Pancreas (tissue), 10 donors: ENCODE measurements at regions of chr6 and their contacts with region 1.

Region 1: GRCh38 chr6:131909408-131910218 is 41.6 kb downstream of the CCN2 start:
- DNase-seq: peak in 5 of 6 donors; percentile 53 to 80 (median 64)
- ATAC-seq: peak; percentile 85 to 97 (median 94)
- H3K4me3 ChIP-seq: no peak overlapping the region
- H3K27ac ChIP-seq: no peak overlapping the region
- H3K4me1 ChIP-seq: no peaks in the 10 kb centered on the region
- H3K27me3 ChIP-seq: no peaks in the 10 kb centered on the region
- CTCF ChIP-seq: peak; percentile 78 to 86 (median 85)

Region 2: GRCh38 chr6:131683479-131683878 is 226.1 kb before region 1 on chr6:
- intact Hi-C with region 1: no loop called
- DNase-seq: no peak
- ATAC-seq: no peak
- H3K4me3 ChIP-seq: no peak overlapping the region
- H3K27ac ChIP-seq: no peak overlapping the region
- H3K4me1 ChIP-seq: no peaks in the 10 kb centered on the region
- H3K27me3 ChIP-seq: no peaks in the 10 kb centered on the region
- CTCF ChIP-seq: no peak

Region 3: DNA sequence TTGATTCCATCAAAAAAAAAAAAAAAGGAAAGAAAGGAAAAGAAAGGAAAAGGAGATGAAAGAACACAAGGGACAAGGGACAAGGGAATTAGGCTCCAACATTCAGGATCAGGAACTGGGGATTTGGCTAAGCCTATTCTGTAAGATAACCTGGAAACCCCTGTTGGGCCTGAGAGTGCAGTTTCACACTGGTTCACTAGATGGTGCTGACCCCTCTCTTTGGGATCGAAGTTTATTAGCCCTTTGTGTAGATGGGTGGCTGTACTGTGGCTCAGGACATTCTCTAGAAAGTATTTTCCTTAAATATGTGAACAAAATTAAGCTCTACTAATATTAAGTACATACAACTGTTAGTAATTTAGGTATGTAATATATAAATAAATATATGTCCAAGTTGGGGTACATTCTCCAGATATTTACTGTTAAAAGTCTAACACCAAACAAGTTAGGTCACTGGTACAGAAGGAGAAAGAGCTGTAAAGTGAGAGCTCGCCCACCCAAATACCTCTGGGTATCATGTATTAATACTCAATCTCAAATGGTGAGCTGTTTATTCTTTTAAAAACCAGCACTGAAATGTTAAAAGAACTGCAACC is 214.7 kb before region 1 on chr6:
- intact Hi-C with region 1: loop called in 1 of 3 experiments (anchors 5 kb)
- DNase-seq: peak in 3 of 6 donors; percentile 18 to 52 (median 20)
- ATAC-seq: peak; percentile 55 to 95 (median 94)
- H3K4me3 ChIP-seq: no peak overlapping the region
- H3K27ac ChIP-seq: no peak overlapping the region
- H3K4me1 ChIP-seq: no peaks in the 10 kb centered on the region
- H3K27me3 ChIP-seq: no peaks in the 10 kb centered on the region
- CTCF ChIP-seq: peak; percentile 26 to 63 (median 50)

Region 4: GRCh38 chr6:131782764-131783163 is 126.8 kb before region 1 on chr6:
- intact Hi-C with region 1: loop called in 2 of 3 experiments (anchors 5 to 10 kb)
- DNase-seq: peak in 3 of 6 donors; percentile 17 to 46 (median 18)
- ATAC-seq: peak; percentile 78 to 95 (median 90)
- H3K4me3 ChIP-seq: no peak overlapping the region
- H3K27ac ChIP-seq: no peak overlapping the region
- H3K4me1 ChIP-seq: peaks cover under 1 to 11% (median 4%) of the 10 kb centered on the region in 3 donors
- H3K27me3 ChIP-seq: no peaks in the 10 kb centered on the region
- CTCF ChIP-seq: peak in 2 of 4 donors; percentile 10 to 13

Region 5: DNA sequence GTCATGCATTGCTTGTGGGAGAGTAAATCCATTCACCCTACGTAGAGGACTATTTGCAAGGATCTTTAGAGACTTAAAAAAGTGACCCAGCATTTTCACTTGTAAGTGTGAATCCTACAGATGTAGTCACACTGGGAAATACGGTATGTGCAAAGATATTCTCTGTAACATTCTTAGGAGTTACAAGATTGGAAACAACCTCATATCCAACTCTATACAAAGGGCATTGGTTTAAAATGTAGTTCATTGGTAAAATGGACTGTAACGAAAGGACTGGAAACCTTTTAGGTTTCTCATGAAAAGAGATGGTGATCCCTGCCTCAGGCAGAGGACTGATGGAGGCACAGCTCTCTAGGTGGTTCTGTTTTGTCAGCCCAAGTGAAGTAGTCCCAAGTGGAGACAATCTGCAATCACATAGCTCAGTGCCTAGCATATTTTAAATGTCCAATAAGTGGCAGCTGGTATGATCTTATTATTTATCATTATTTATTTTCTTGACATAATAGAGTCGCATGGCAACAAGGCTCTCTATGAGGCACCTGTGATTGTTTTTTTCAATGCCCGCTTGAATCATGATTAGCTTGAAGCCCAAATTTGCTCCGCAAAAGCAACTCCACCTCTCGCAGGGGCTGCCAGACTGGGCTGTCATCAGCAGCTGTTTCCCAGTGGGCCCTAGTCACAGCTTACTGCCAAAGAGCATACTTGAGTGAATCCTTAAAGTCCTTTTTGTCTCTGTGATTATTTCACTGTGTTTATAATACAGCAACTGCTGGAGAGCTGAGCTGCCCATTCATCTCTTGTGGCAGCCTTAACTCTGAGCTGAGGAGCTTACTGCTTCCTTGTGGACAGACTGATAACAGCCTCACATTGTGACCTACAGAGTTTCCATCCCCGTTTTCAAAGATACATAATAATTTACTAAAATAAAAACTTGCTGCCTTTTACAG is 121.6 kb before region 1 on chr6:
- intact Hi-C with region 1: loop called in 2 of 3 experiments (anchors 5 to 10 kb)
- DNase-seq: peak in 2 of 6 donors; percentile 9 to 27
- ATAC-seq: peak; percentile 73 to 86 (median 84)
- H3K4me3 ChIP-seq: no peak overlapping the region
- H3K27ac ChIP-seq: peak overlapping the region in 1 of 4 donors; percentile 33
- H3K4me1 ChIP-seq: peaks cover 3 to 12% (median 4%) of the 10 kb centered on the region in 3 donors
- H3K27me3 ChIP-seq: no peaks in the 10 kb centered on the region
- CTCF ChIP-seq: no peak